ENCODE measurements at regions of chr14 and their contacts with region 1.

Region 1: GRCh38 chr14:60266021-60266937 is 17.3 kb downstream of the PPM1A start:
- DNase-seq: peak; percentile 48
- H3K4me3 ChIP-seq: no peak overlapping the region
- H3K27ac ChIP-seq: no peak overlapping the region
- H3K4me1 ChIP-seq: no peaks in the 10 kb centered on the region
- CTCF ChIP-seq: peak; percentile 92

Region 2: GRCh38 chr14:60254176-60254575 is 12.1 kb before region 1 on chr14:
- CTCF ChIA-PET with region 1: no interaction called
- POLR2A ChIA-PET with region 1: interaction called, 32 read pairs
- intact Hi-C with region 1: no loop called
- DNase-seq: no peak
- H3K4me3 ChIP-seq: no peak overlapping the region
- H3K27ac ChIP-seq: no peak overlapping the region
- H3K4me1 ChIP-seq: peaks cover 36% of the 10 kb centered on the region
- CTCF ChIP-seq: no peak

Region 3: DNA sequence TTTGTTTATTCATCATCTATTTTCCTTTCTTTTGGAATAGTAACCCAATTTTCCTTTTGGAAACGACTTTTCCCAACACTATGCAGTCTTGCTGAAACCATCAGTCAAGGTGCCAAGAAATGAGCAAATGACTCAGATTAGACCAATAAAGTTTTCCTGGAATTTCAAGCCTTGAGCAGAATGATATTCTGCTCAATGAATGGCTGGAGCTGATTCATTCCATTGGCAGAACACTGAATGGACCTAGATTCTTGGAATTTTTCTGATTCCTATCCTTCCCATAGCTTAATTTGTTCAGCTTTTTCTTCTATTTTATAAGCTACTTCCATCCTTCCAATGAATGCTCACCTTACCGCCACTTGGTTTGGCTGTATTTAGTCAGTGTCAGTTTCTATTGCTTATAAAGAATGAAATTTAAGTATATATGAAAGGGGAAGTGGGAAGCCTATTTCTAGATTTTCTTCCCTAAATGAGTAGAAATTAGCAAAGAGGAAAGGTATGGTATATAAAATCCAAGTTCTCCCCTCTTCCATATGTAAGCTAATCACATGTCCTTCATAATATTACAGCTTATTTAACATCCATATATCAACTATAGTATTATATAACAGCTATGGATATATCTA is 130.6 kb after region 1 on chr14:
- CTCF ChIA-PET with region 1: no interaction called
- POLR2A ChIA-PET with region 1: no interaction called
- intact Hi-C with region 1: no loop called
- DNase-seq: no peak
- H3K4me3 ChIP-seq: no peak overlapping the region
- H3K27ac ChIP-seq: no peak overlapping the region
- H3K4me1 ChIP-seq: no peaks in the 10 kb centered on the region
- CTCF ChIP-seq: no peak